ENCODE measurements at regions of chr21 and their contacts with region 1.

Region 1: DNA sequence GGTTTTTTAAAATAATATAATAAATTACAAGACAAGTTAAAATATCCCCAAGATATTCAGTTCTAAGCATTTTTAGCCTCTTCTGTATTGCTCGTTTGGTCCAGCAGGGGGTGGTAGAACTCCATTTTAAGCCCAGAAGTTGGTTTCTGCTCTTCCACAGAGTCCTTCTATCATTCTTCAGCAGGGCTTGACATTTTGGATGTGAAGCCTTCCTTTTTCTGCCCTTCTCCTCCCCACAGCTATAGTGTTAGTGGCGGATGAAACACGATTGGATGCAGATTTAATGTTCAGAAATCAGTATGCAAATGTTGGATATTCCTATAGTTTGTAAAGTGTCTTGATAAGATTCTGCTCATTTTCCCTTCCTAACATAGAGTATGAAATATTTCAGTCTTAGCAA is 1.4 kb downstream of the NCAM2 start:
- DNase-seq: no peak
- ATAC-seq: peak in 1 of 2 donors; percentile 54
- H3K4me3 ChIP-seq: no peak overlapping the region
- H3K27ac ChIP-seq: no peak overlapping the region
- H3K4me1 ChIP-seq: peaks cover 6 to 7% of the 10 kb centered on the region in 2 donors
- H3K27me3 ChIP-seq: peaks cover 13 to 18% (median 15%) of the 10 kb centered on the region in 3 donors
- CTCF ChIP-seq: peak in 4 of 5 experiments; percentile 43 to 50 (median 44)
- POLR2A ChIP-seq: no peak

Region 2: GRCh38 chr21:21179619-21180298 is 180.1 kb after region 1 on chr21:
- in situ Hi-C with region 1: no loop called
- intact Hi-C with region 1: no loop called
- DNase-seq: no peak
- ATAC-seq: no peak
- H3K4me3 ChIP-seq: no peak overlapping the region
- H3K27ac ChIP-seq: no peak overlapping the region
- H3K4me1 ChIP-seq: no peaks in the 10 kb centered on the region
- H3K27me3 ChIP-seq: no peaks in the 10 kb centered on the region
- CTCF ChIP-seq: no peak
- POLR2A ChIP-seq: no peak

Region 3: DNA sequence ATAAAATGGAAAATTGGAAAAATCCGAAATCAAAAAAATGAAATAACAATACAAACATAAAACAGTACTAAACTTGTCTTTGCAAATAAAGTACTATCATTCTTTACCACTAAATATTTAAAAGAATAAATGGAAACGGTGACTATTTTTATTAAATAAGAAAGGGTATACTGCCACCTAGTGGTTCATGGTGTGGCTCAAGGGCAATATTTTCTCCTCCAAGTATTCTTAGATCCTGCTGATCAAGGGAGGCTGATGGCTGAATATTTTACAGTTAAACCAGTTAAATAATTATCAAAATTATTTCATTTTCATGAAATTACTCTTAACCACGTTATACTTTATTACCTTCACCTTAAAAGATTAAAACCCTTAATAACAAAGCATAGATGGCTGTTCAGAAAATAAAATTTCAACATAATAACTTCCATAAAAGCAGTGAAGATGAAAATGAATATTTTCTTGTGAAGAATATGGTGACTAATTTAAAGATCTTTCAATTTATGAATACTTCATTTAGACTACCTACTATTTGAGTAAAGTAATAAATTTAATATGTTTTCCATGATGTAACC is 1792.4 kb after region 1 on chr21:
- in situ Hi-C with region 1: loop called in 1 of 4 experiments (anchors 25 kb)
- intact Hi-C with region 1: no loop called
- DNase-seq: no peak
- ATAC-seq: no peak
- H3K4me3 ChIP-seq: no peak overlapping the region
- H3K27ac ChIP-seq: no peak overlapping the region
- H3K4me1 ChIP-seq: no peaks in the 10 kb centered on the region
- H3K27me3 ChIP-seq: no peaks in the 10 kb centered on the region
- CTCF ChIP-seq: peak in 4 of 5 experiments; percentile 33 to 69 (median 50)
- POLR2A ChIP-seq: no peak

Region 4: GRCh38 chr21:22804151-22804550 is 1804.5 kb after region 1 on chr21:
- in situ Hi-C with region 1: loop called in 2 of 4 experiments (anchors 25 kb)
- intact Hi-C with region 1: no loop called
- DNase-seq: no peak
- ATAC-seq: no peak
- H3K4me3 ChIP-seq: no peak overlapping the region
- H3K27ac ChIP-seq: no peak overlapping the region
- H3K4me1 ChIP-seq: no peaks in the 10 kb centered on the region
- H3K27me3 ChIP-seq: no peaks in the 10 kb centered on the region
- CTCF ChIP-seq: no peak
- POLR2A ChIP-seq: no peak

Measured in gastrocnemius medialis (tissue), 4 donors.